Left ventricle myocardium superior (tissue), 1 donor: ENCODE measurements at regions of chr12 and their contacts with region 1.

Region 1: GRCh38 chr12:48105862-48106680 is at the start of gene SENP1:
- DNase-seq: peak; percentile 93
- ATAC-seq: peak; percentile 98
- total RNA-seq, gene SENP1: 7.6 TPM

Region 2: DNA sequence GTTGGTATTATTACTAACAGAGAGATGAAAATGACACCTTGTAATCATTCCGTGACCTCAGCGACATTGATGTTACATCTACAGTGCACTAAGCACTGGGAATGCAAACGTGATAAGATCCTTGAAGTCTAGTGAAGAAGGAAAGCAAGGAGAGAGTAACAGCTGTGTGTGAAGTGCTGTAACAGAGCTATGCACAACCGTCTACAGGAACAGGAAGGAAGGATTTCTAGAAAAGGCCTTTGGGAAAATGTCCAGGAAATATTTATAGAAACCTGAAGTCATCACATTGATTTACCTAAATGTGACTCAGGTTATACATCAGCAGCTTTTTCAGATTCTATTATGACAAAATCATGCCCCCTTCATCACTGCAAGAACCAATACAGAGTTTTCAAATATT is 722.1 kb before region 1 on chr12:
- intact Hi-C with region 1: no loop called
- DNase-seq: no peak
- ATAC-seq: no peak

Region 3: DNA sequence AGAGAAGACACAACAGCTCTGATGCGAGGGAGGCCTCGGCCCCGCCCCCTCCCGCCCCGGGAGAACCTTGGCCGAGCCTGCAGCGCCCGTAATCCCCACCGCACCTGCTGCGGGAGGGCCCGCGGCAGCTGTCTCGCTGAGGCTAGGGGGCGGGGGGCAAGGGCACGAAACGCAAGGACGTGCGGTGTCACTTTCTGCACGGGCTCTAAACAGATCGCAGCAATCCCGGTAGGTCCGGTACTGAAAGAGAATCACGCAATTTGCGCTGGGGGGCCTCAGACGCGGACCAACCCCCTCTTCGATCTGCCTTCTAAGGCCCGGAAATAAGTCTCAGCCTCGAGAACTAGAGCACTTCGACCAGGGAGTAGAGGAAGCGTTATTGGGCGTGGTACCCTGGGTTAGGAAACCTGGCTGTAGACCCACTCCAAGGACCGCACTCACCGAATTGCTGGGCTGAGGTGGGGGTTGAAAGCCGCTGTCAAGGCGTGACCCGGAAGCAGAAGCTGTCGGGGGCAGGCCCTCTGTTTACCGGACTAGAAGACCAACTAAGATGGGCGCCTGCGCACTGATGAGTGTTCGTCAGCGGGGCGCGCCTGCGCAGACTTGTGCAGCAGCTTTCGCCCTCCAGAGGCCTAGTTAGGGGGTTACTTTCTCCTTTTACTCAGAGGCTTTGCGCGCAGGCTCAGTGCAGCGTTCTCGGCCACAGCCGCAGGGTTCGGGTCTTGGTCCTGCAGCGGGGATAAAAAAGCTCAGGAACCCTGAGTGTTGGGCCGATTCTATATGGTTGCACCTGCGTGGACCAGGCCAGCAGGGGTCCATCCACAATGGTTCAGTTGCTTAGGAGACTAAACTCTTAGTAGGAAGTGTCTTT is 51.2 kb after region 1 on chr12 and contains the start of gene ASB8:
- intact Hi-C with region 1: loop called (anchors 10 kb)
- DNase-seq: peak; percentile 100
- ATAC-seq: peak; percentile 97
- total RNA-seq, gene ASB8: 89.0 TPM